ENCODE measurements at regions of chr15 and their contacts with region 1.

Region 1: GRCh38 chr15:80059786-80060355 is 395 bp downstream of the ZFAND6 start:
- DNase-seq: peak in 32 of 42 donors; percentile 11 to 84 (median 42)

Region 2: GRCh38 chr15:79923515-79924395 is 136.1 kb before region 1 on chr15:
- intact Hi-C with region 1: loop called (anchors 5 kb)
- DNase-seq: peak; percentile 66 to 95 (median 86)

Region 3: DNA sequence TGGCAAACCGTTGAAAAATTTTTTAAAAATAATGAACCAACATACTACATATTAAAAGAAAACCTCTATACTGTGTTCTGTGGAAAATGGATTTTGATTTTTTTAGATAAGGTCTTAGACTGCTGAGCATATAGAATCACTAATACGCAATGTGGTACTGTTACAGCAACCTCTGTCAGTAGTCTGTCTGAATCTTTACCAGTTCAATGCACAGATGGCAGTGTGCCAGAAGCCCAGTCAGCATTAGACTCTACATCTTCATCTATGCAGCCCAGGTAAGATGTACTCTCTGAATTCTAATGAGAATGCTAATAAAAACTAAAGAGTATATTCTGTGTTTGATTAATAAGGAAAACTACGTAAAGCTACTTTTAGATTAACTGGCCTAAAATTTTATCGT is 61.7 kb after region 1 on chr15:
- intact Hi-C with region 1: no loop called
- DNase-seq: peak in 1 of 42 donors; percentile 6